ENCODE measurements at regions of chr17 and their contacts with region 1.

Region 1: GRCh38 chr17:32783602-32784001 is 93.3 kb downstream of the MYO1D start:
- DNase-seq: peak; percentile 24

Region 2: GRCh38 chr17:32755045-32755805 is 28.4 kb before region 1 on chr17:
- CTCF ChIA-PET with region 1: no interaction called
- POLR2A ChIA-PET with region 1: no interaction called
- DNase-seq: peak; percentile 24

Region 3: DNA sequence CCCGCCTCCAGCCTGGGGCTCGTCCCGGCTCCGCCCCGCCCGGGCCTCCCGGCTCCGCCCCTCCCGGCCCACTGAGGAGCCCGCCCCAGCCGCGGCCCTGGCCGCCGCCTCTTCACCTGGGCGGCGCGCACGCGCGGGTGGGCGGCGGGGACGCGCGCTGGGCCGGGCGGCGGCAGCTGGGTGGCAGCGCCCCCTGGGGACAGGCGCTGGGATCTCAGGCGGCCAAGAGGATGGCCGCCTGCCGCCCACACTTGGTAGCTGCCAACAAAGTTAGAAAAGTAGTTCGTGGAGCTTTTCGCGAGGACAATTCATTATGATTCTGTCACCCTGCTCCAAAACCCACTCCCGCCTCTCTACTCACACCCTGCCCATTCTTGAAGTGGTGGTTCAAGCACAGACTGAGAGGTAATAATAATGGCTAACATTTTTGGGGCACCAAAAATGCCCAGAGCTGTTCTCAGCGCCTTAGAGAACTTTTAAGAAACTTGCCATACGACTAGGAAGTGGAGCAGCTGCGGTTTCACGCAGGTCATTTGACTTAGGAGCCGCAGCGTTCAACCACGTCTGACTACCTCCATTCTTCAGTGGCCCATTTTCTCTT is 93.7 kb after region 1 on chr17:
- CTCF ChIA-PET with region 1: interaction called, 47 read pairs
- POLR2A ChIA-PET with region 1: interaction called, 10 read pairs
- DNase-seq: peak; percentile 86

Region 4: GRCh38 chr17:32936894-32937500 is 153.4 kb after region 1 on chr17:
- CTCF ChIA-PET with region 1: interaction called, 11 read pairs
- POLR2A ChIA-PET with region 1: no interaction called
- DNase-seq: peak; percentile 69

Measured in HEK293T (cell line).